ENCODE measurements at regions of chr6 and their contacts with region 1.

Region 1: DNA sequence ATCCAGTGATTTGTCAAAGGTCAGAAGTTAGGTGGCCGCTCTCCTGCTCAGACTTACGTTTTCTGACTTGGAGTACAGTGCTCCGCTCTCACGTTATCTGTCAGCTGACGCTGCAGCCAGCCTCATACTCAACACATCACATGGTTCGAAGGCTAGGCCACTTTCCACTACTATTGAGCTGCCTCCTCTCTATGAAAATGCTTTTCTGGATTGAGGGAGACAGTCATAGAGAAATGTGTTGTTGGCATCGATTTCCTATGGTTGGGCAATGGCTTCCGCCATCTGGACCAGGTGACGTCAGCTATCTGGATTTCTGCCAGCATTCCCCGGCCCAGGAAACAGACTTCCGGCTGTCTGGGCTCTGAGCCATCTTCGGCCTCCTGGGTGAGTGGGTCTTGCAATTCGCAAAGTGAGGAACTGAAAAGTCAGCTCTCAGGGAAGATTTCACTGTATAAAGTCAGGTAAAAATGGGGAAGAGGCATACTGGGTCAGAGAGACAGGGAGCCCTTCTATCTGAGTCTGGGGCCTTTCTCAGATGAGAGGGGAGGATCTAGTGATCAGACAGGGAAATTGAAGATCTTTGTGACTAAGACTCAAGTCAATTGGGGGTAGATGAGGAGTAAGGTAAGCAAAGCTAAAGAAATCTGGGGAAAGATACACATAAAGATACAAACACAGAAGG is 37.5 kb upstream of the IER3 start:
- DNase-seq: peak; percentile 94
- ATAC-seq: peak; percentile 53
- H3K4me3 ChIP-seq: peak overlapping the region; percentile 27 to 48
- H3K27ac ChIP-seq: peak overlapping the region; percentile 92
- H3K4me1 ChIP-seq: peaks cover 84 to 99% of the 10 kb centered on the region in 2 experiments
- H3K27me3 ChIP-seq: no peaks in the 10 kb centered on the region
- CTCF ChIP-seq: no peak
- POLR2A ChIP-seq: no peak
- RAD21 ChIP-seq: peak; percentile 31; the same call in 1 of the 2 replicates

Region 2: GRCh38 chr6:30742316-30743098 is 39.4 kb before region 1 on chr6 and contains the start of gene FLOT1:
- CTCF ChIA-PET with region 1: no interaction called
- POLR2A ChIA-PET with region 1: interaction called, 680 read pairs
- RAD21 ChIA-PET with region 1: no interaction called
- intact Hi-C with region 1: loop called (anchors 1 kb)
- DNase-seq: peak; percentile 94
- ATAC-seq: peak; percentile 70
- H3K4me3 ChIP-seq: peak within 1 kb of the TSS; percentile 79 to 85
- H3K27ac ChIP-seq: peak within 1 kb of the TSS; percentile 93
- H3K4me1 ChIP-seq: peaks cover 37 to 79% of the 10 kb centered on the region in 2 experiments
- H3K27me3 ChIP-seq: no peaks in the 10 kb centered on the region
- CTCF ChIP-seq: no peak
- POLR2A ChIP-seq: peak; percentile 98
- RAD21 ChIP-seq: no peak
- total RNA-seq, gene FLOT1: 117 TPM

Region 3: DNA sequence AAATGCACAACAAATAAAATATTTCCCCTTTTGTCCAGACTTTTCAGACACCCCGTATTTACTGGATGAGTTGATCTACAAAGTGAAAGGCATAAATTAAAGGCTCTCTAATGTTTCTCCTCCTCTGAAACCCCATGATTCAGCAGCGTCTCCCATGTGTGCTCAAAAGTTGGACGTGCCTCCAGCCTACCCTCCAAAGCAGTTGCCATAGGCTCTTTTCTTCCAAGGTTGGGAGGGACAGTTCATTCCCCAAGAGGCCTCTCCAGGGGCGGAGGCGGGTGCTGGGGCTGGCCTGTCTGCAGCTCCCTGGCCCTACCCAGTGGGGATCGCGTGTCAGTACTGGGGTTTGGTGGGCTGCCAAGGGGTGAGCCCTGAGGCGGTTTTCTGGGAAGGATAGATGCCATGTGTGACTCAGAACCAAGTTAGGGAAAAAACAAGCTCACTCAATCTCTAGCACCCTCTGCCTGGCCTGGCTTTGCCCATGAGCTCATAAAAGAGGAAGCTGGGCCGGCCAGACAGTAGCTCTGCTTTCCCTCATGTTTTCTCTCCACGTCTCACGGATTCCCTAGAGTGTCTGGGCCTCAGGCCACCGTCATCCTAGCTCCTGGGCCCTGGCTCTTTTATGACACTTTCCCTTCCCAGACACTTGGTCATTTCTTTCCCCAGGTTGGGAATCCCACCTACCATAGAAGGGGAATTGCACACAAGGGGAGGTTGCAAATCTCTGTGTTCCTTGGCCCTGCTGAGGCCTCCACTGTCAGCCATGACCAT is 29.5 kb before region 1 on chr6:
- CTCF ChIA-PET with region 1: no interaction called
- POLR2A ChIA-PET with region 1: interaction called, 680 read pairs
- RAD21 ChIA-PET with region 1: interaction called in 1 of 2 experiments, 4 read pairs
- intact Hi-C with region 1: loop called (anchors 2 kb)
- DNase-seq: peak; percentile 99
- ATAC-seq: peak; percentile 82
- H3K4me3 ChIP-seq: no peak overlapping the region
- H3K27ac ChIP-seq: peak overlapping the region; percentile 96
- H3K4me1 ChIP-seq: peaks cover 76 to 97% of the 10 kb centered on the region in 2 experiments
- H3K27me3 ChIP-seq: no peaks in the 10 kb centered on the region
- CTCF ChIP-seq: no peak
- POLR2A ChIP-seq: no peak
- RAD21 ChIP-seq: no peak

Region 4: DNA sequence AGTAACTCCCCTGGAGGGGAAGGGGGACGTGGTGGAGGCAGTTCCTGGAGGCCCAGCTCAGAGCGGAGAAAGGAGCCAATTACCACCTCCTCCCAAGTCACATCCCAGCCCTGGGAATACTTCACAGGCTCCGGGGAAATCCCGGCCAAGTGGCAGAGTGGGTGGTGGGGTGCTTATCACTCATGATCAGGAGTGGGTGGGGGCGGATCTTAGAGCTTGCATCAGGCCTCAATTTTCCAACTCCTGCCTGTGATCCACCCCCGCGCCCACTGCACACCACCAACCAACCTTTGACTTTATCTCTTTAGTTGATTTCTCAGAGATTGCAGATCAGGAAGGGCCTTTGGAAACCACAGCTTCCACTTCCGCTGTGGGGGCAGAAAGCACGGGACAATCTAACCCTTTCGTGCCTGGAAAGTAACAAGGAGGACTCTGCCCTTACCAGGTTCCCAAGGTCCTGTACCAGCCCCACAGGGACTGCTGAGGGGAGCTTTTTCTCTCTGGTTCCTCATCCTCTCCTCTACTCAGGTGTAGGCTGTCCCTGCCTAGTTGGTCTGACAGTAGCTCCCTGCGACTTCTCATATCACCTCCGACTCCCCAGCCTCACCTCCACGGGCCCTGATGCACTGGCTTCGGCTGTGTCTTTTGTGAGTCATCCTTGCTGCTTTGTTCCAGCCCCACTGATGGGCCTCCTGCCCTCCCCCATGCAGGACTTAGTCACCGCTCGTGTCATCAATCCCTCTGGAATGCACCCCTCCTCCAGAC is 12.6 kb before region 1 on chr6:
- CTCF ChIA-PET with region 1: no interaction called
- POLR2A ChIA-PET with region 1: interaction called, 137 read pairs
- RAD21 ChIA-PET with region 1: no interaction called
- intact Hi-C with region 1: loop called (anchors 1 kb)
- DNase-seq: peak; percentile 96
- ATAC-seq: peak; percentile 84
- H3K4me3 ChIP-seq: peak overlapping the region; percentile 15 to 48
- H3K27ac ChIP-seq: peak overlapping the region; percentile 76
- H3K4me1 ChIP-seq: peaks cover 66 to 75% of the 10 kb centered on the region in 2 experiments
- H3K27me3 ChIP-seq: no peaks in the 10 kb centered on the region
- CTCF ChIP-seq: no peak
- POLR2A ChIP-seq: no peak
- RAD21 ChIP-seq: no peak

Region 5: GRCh38 chr6:30806581-30807183 is 24.8 kb after region 1 on chr6:
- CTCF ChIA-PET with region 1: no interaction called
- POLR2A ChIA-PET with region 1: interaction called, 47 read pairs
- RAD21 ChIA-PET with region 1: interaction called in 1 of 2 experiments, 3 read pairs
- intact Hi-C with region 1: no loop called
- DNase-seq: peak; percentile 78
- ATAC-seq: peak; percentile 26
- H3K4me3 ChIP-seq: peak overlapping the region in 1 of 2 experiments; percentile 27; a peak in 1 of 4 replicates
- H3K27ac ChIP-seq: peak overlapping the region; percentile 69
- H3K4me1 ChIP-seq: peaks cover 55 to 78% of the 10 kb centered on the region in 2 experiments
- H3K27me3 ChIP-seq: no peaks in the 10 kb centered on the region
- CTCF ChIP-seq: no peak
- POLR2A ChIP-seq: peak; percentile 99
- RAD21 ChIP-seq: no peak